GM12878 (cell line): ENCODE measurements at regions of chr6 and their contacts with region 1.

Region 1: DNA sequence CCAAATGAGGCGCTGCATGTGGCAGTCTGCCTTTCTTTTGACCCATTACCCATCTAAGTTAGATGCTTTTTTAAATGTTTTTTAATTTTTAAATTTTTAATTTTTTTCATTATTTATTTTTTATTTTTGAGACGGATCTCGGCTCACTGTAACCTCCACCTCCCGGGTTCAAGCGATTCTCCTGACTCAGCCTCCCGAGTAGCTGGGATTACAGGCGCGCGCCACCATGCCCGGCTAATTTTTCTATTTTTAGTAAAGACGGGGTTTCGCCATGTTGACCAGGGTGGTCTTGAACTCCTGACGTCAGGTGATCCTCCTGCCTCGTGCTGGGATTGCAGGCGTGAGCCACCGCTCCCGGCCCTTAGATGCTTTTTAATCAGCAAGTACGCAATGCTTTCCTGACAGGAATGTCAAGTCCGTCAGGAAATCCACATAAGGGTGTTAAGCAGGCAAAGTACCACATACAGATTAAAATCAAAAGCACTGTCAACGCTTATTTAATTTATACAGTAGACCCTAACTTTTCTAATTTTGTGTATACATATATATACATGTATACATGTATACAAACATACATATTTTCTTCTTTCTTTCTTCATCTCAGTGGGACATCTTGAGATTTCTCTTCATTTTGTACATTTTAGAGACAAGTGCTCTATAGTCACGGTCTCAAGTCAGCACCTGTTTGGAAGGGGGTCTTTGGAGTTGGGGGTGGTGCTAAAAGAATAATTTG is 995 bp upstream of the GSTA4 start:
- DNase-seq: peak; percentile 51
- ATAC-seq: peak; percentile 11
- H3K4me3 ChIP-seq: peak overlapping the region; percentile 65
- H3K27ac ChIP-seq: no peak overlapping the region
- H3K4me1 ChIP-seq: no peaks in the 10 kb centered on the region
- H3K27me3 ChIP-seq: no peaks in the 10 kb centered on the region
- CTCF ChIP-seq: no peak
- EP300 ChIP-seq: no peak
- POLR2A ChIP-seq: no peak
- RAD21 ChIP-seq: no peak

Region 2: DNA sequence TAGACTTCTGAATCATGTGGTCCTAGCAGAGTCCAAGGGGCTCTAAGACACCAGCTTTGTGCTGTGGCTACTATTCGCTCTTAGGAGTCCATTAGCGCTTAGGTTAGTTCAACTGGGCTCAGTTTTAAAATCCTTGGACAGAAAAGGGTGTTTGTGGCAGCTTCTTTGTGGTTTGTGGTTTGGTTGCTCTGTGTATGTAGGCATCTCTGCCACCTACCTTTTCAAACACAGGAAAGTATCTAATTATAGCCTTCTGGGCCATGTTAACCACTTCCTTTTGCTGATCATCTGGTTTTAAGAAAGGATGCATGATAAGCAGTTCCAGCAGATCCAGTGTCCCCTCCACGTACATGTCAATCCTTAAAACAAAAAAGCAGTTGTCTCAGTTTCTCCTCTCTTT is 11.8 kb before region 1 on chr6:
- CTCF ChIA-PET with region 1: interaction called, 21 read pairs
- POLR2A ChIA-PET with region 1: interaction called, 4 read pairs
- RAD21 ChIA-PET with region 1: interaction called, 5 read pairs
- SMC1A ChIA-PET with region 1: interaction called, 5 read pairs
- in situ Hi-C with region 1: no loop called
- intact Hi-C with region 1: no loop called
- DNase-seq: peak; percentile 31
- ATAC-seq: peak; percentile 79
- H3K4me3 ChIP-seq: no peak overlapping the region
- H3K27ac ChIP-seq: no peak overlapping the region
- H3K4me1 ChIP-seq: peaks cover 13% of the 10 kb centered on the region
- H3K27me3 ChIP-seq: no peaks in the 10 kb centered on the region
- CTCF ChIP-seq: no peak
- EP300 ChIP-seq: no peak
- POLR2A ChIP-seq: no peak
- RAD21 ChIP-seq: no peak

Region 3: GRCh38 chr6:53048431-53049195 is 52.5 kb after region 1 on chr6:
- CTCF ChIA-PET with region 1: interaction called, 17 read pairs
- POLR2A ChIA-PET with region 1: no interaction called
- RAD21 ChIA-PET with region 1: interaction called, 3 read pairs
- SMC1A ChIA-PET with region 1: interaction called, 6 read pairs
- in situ Hi-C with region 1: no loop called
- intact Hi-C with region 1: no loop called
- DNase-seq: peak; percentile 40
- ATAC-seq: peak; percentile 94
- H3K4me3 ChIP-seq: peak overlapping the region; percentile 34; the same call in 1 of the 2 replicates
- H3K27ac ChIP-seq: peak overlapping the region; percentile 9; the same call in 1 of the 2 replicates
- H3K4me1 ChIP-seq: 0 out of 2 replicates have a peak, but pooled peaks cover 7% of the 10 kb centered on the region
- H3K27me3 ChIP-seq: no peaks in the 10 kb centered on the region
- CTCF ChIP-seq: no peak
- EP300 ChIP-seq: no peak
- POLR2A ChIP-seq: no peak
- RAD21 ChIP-seq: no peak

Region 4: GRCh38 chr6:53056273-53056672 is 60.2 kb after region 1 on chr6:
- CTCF ChIA-PET with region 1: interaction called, 24 read pairs
- POLR2A ChIA-PET with region 1: no interaction called
- RAD21 ChIA-PET with region 1: interaction called, 3 read pairs
- SMC1A ChIA-PET with region 1: interaction called, 7 read pairs
- in situ Hi-C with region 1: no loop called
- intact Hi-C with region 1: no loop called
- DNase-seq: no peak
- ATAC-seq: peak; percentile 66
- H3K4me3 ChIP-seq: no peak overlapping the region
- H3K27ac ChIP-seq: no peak overlapping the region
- H3K4me1 ChIP-seq: no peaks in the 10 kb centered on the region
- H3K27me3 ChIP-seq: no peaks in the 10 kb centered on the region
- CTCF ChIP-seq: no peak
- EP300 ChIP-seq: no peak
- POLR2A ChIP-seq: no peak
- RAD21 ChIP-seq: no peak

Region 5: GRCh38 chr6:53064726-53065215 is 68.7 kb after region 1 on chr6:
- CTCF ChIA-PET with region 1: interaction called, 23 read pairs
- POLR2A ChIA-PET with region 1: no interaction called
- RAD21 ChIA-PET with region 1: interaction called, 3 read pairs
- SMC1A ChIA-PET with region 1: interaction called, 18 read pairs
- in situ Hi-C with region 1: no loop called
- intact Hi-C with region 1: no loop called
- DNase-seq: peak; percentile 91
- ATAC-seq: peak; percentile 81
- H3K4me3 ChIP-seq: peak overlapping the region; percentile 85
- H3K27ac ChIP-seq: peak overlapping the region; percentile 78
- H3K4me1 ChIP-seq: peaks cover 9% of the 10 kb centered on the region; the same call in 1 of the 2 replicates
- H3K27me3 ChIP-seq: no peaks in the 10 kb centered on the region
- CTCF ChIP-seq: 0 out of 6 replicates have a peak, but pooled peaks of 1 of the 3 experiments have one; percentile 4
- EP300 ChIP-seq: no peak
- POLR2A ChIP-seq: no peak
- RAD21 ChIP-seq: no peak